Heart right ventricle (tissue), 16 donors: ENCODE measurements at regions of chr18 and their contacts with region 1.

Region 1: GRCh38 chr18:12038639-12039417 is 54.8 kb upstream of the ANKRD62 start:
- DNase-seq: peak; percentile 82 to 88
- ATAC-seq: peak; percentile 93 to 97 (median 96)
- H3K4me3 ChIP-seq: peak overlapping the region; percentile 46 to 70 (median 62)
- H3K27ac ChIP-seq: peak overlapping the region in 8 of 10 donors; percentile 24 to 71 (median 47)
- H3K4me1 ChIP-seq: peaks cover 0 to 16% (median 10%) of the 10 kb centered on the region in 9 donors
- H3K27me3 ChIP-seq: peaks cover 0 to 8% (median 0%) of the 10 kb centered on the region in 7 donors
- CTCF ChIP-seq: peak; percentile 93 to 100 (median 99)

Region 2: GRCh38 chr18:11654736-11655605 is 383.9 kb before region 1 on chr18:
- intact Hi-C with region 1: loop called in 4 of 10 experiments (anchors 5 to 10 kb)
- DNase-seq: peak; percentile 45 to 67
- ATAC-seq: peak in 7 of 8 donors; percentile 55 to 80 (median 64)
- H3K4me3 ChIP-seq: no peak overlapping the region
- H3K27ac ChIP-seq: no peak overlapping the region
- H3K4me1 ChIP-seq: peaks cover 0 to 7% (median 0%) of the 10 kb centered on the region in 9 donors
- H3K27me3 ChIP-seq: peaks cover 0 to 38% (median 23%) of the 10 kb centered on the region in 7 donors
- CTCF ChIP-seq: peak; percentile 48 to 81 (median 75)

Region 3: DNA sequence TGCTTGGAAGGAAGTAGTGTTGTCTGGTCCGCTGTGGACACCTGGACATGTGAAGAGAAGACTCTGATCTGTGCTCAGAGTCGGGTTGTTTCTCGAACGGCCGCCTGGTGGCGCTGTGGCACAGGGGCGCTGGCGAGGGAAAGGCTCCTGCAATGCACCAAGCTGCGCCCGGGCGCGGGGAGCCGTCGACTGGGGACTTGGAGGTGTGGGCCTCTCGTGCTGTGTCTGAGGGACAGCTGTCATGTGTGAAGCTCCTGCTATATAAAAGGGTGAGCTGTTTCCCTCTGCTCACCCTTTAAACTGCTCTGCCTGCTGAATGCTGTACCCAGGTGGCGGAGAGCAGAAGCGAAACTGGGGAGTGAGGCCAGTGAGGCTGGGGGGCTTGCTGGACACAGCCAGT is 305.8 kb before region 1 on chr18:
- intact Hi-C with region 1: loop called in 8 of 10 experiments (anchors 2 to 10 kb)
- DNase-seq: peak; percentile 65 to 82
- ATAC-seq: peak; percentile 80 to 96 (median 92)
- H3K4me3 ChIP-seq: peak overlapping the region in 6 of 10 donors; percentile 28 to 37 (median 30)
- H3K27ac ChIP-seq: no peak overlapping the region
- H3K4me1 ChIP-seq: peaks cover 0 to 7% (median 0%) of the 10 kb centered on the region in 9 donors
- H3K27me3 ChIP-seq: peaks cover 3 to 48% (median 26%) of the 10 kb centered on the region in 7 donors
- CTCF ChIP-seq: peak; percentile 80 to 95 (median 92)

Region 4: DNA sequence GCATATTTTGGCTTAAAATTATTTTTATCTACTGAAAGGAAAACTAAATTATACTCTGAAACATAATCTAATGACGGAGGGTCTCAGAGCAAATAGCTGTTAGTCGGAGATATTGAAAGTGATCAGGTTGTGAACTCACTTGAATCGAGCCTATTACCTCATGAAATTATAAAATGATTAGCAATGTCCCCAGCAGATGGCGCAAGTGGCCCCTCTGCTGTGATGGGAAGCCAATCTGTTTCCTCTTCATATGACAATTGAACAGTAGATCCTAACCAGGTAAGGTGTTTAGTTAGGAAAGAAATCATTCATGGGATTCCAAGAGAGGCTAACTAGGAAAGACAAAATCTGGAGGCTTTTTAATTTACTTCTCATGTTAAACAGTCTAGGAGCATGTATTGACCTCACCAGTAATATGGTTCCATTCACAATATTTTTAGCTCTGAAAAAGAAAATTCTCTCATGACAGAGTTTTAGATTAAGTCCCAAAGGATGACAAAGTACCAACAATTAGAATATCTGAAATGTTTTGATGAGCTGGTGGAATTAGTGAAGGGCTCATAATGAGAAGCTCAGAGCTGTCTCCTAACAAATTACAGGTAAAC is 100.9 kb before region 1 on chr18:
- intact Hi-C with region 1: loop called in 9 of 10 experiments (anchors 1 to 5 kb)
- DNase-seq: peak; percentile 72 to 73
- ATAC-seq: peak; percentile 42 to 84 (median 76)
- H3K4me3 ChIP-seq: no peak overlapping the region
- H3K27ac ChIP-seq: no peak overlapping the region
- H3K4me1 ChIP-seq: peaks cover 0 to 9% (median 0%) of the 10 kb centered on the region in 9 donors
- H3K27me3 ChIP-seq: no peaks in the 10 kb centered on the region
- CTCF ChIP-seq: peak; percentile 70 to 90 (median 85)

Region 5: DNA sequence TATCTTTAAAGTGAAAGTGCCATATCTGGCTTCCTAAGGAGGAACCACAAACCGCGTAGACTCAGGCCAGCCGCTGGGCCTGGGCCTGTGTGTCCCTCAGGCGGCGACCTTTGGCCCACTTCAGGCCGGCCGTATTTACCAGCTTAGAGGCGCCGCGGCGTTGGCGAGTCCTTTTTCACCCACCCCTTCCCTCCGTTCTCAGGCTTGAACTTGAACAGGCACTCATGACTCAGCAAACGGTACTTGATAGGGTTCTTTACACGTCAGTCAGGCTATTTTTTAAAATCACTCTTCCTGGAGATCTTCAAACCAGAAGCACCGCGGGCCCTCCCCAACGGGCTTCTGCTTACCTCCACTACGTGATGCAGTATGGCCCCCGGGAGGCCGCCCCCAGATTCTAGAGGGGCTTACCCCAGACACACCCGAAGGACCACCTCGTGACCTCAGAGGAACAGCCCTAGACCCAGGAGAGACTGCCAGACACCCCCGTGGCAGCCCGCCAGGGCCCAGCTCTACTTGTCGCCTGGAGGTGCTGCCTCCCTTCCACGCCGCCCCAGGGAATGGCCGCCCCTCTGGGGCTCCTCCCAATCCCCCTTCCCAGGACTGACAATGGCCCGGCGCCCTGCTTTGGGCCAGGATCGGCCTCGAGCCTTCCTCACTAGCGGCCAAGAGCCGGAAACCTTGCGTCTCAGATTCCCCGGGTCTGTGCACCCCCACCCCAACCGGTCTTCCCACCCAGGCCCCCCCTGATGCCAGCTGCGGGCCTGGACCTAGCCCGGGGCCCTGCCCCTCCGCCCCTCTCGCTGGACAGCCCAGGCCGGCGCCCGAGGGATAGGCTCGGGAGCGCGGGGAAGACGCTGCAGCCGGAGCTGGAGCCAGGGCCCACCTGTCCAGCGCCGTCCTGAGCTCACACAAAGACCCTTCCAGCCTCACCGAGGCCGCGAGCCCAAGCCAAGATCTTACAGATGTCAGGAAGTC is 91.3 kb before region 1 on chr18:
- intact Hi-C with region 1: loop called in 1 of 10 experiments (anchors 2 kb)
- DNase-seq: peak; percentile 92 to 94
- ATAC-seq: peak; percentile 96 to 99 (median 98)
- H3K4me3 ChIP-seq: peak overlapping the region; percentile 23 to 75 (median 59)
- H3K27ac ChIP-seq: peak overlapping the region; percentile 76 to 99 (median 97)
- H3K4me1 ChIP-seq: peaks cover 0 to 24% (median 15%) of the 10 kb centered on the region in 9 donors
- H3K27me3 ChIP-seq: no peaks in the 10 kb centered on the region
- CTCF ChIP-seq: peak in 3 of 9 donors; percentile 6 to 15 (median 8)

Region 6: GRCh38 chr18:11980555-11981382 is 58.1 kb before region 1 on chr18:
- intact Hi-C with region 1: loop called in 2 of 10 experiments (anchors 10 kb)
- DNase-seq: peak; percentile 96 to 99
- ATAC-seq: peak; percentile 89 to 97 (median 94)
- H3K4me3 ChIP-seq: peak overlapping the region; percentile 77 to 95 (median 88)
- H3K27ac ChIP-seq: peak overlapping the region; percentile 93 to 98 (median 96)
- H3K4me1 ChIP-seq: peaks cover 0 to 51% (median 31%) of the 10 kb centered on the region in 9 donors
- H3K27me3 ChIP-seq: no peaks in the 10 kb centered on the region
- CTCF ChIP-seq: peak in 4 of 9 donors; percentile 11 to 46 (median 44)

Region 7: GRCh38 chr18:11995445-11996189 is 43.2 kb before region 1 on chr18:
- intact Hi-C with region 1: loop called in 4 of 10 experiments (anchors 5 kb)
- DNase-seq: peak; percentile 76 to 80
- ATAC-seq: peak; percentile 79 to 93 (median 88)
- H3K4me3 ChIP-seq: peak overlapping the region in 2 of 10 donors; percentile 5 to 7
- H3K27ac ChIP-seq: peak overlapping the region in 9 of 10 donors; percentile 20 to 77 (median 65)
- H3K4me1 ChIP-seq: peaks cover 6 to 56% (median 28%) of the 10 kb centered on the region in 9 donors
- H3K27me3 ChIP-seq: no peaks in the 10 kb centered on the region
- CTCF ChIP-seq: peak; percentile 67 to 90 (median 85)

Region 8: DNA sequence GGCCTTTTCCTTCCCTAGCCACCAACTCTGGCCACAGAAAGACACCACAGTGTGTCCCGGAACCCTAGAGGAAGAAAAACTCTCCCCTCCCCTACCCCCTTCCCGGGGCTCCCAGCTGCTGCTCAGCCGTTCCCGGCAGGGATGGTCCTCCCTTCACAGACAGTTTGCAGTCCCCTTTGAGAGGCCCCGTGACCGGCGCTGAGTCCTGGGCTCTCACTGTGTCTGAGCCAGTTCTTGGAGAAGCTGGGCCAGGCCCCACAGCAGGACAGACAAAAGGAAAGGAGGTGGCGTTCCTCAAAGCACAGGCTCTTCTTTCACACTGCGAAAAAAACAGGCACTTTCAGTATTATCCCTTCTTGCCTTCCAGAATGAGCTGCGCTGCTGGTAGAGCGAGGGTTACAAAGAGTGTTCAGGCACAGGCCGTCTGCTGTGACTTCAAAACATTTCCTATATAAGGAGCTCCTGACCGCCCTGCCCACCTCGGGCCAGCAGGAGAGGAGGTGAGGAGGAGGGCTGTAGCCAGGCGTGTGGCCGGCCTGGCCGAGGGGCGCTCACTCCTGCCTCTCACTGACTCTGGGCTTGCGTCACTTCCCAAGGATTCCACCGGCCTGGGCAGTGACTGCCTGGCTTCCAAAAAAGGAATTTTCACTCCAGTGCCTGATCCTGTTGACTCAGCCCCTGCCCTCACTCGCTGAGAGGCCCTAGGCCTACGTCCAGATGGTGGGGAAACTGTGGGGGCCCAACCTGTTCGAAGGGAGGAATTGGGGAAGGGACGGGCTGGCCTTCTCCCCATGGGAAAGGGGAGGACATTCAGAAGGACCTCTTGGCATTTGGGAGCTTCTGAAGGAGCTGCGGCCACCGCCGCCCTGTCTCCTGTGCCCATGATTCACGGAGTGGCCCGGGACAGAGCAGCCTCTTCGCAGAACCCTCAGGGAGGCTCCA is 240.2 kb after region 1 on chr18:
- intact Hi-C with region 1: no loop called
- DNase-seq: peak; percentile 82 to 92
- ATAC-seq: peak; percentile 93 to 97 (median 96)
- H3K4me3 ChIP-seq: peak overlapping the region; percentile 2 to 56 (median 49)
- H3K27ac ChIP-seq: peak overlapping the region; percentile 90 to 99 (median 98)
- H3K4me1 ChIP-seq: peaks cover 9 to 49% (median 27%) of the 10 kb centered on the region in 9 donors
- H3K27me3 ChIP-seq: no peaks in the 10 kb centered on the region
- CTCF ChIP-seq: peak in 2 of 9 donors; percentile 16 to 19